GM12878 (cell line): ENCODE measurements at regions of chr5 and their contacts with region 1.

Region 1: DNA sequence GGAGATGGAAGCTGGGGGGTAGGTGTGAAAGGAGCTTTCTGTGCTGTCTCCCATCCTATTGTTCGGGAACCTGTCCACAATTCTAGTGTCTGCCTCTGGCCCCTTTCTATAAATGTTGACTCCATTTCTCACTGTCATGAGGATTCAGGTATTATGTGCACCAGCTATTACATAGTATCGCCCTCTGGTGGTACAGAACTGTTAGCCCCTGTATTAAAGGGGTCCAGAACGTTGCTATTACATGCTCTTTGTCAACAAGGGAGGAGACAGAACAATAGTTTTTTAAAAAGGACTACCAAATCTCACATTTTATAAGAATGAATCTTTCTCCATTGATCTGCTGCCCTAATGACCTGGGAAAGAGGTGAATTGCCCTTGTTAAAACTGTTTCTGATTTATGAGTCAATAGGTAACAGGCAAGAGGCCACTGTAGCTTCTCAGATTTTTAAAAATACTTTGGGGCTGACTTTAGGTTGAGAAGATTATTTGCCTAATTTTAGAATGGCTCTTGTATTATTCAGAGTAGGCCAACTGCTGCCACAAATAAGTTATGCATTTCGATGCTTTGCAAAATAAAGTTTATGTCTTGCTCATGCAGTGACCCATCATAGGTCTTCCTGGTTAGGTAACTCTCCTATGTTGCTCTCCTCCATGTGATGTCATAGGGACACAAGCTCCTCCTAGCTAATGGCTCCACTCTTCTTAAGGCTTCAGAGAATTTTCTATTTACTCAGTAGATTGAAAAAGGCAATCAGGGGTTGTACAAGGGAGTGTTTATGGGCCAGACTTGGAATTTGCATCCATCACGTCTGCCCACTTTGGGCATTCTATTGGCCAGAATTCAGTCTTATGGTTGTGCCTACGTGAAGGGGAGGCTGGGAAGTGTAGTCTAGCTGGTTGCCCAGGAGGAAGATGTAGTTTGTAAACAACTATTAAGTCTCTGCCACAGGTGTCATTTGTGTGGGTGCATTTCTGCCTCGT is 20.8 kb downstream of the DCANP1 start:
- DNase-seq: peak; percentile 12
- ATAC-seq: peak; percentile 98
- H3K4me3 ChIP-seq: no peak overlapping the region
- H3K27ac ChIP-seq: no peak overlapping the region
- H3K4me1 ChIP-seq: no peaks in the 10 kb centered on the region
- H3K27me3 ChIP-seq: peaks cover 0 to 3% of the 10 kb centered on the region in 2 experiments; a peak in 1 of 4 replicates
- CTCF ChIP-seq: peak; percentile 70 to 77 (median 71)
- EP300 ChIP-seq: no peak
- POLR2A ChIP-seq: no peak
- RAD21 ChIP-seq: peak; percentile 75

Region 2: GRCh38 chr5:135393691-135394090 is 32.7 kb before region 1 on chr5:
- CTCF ChIA-PET with region 1: interaction called, 11 read pairs
- POLR2A ChIA-PET with region 1: no interaction called
- RAD21 ChIA-PET with region 1: no interaction called
- SMC1A ChIA-PET with region 1: interaction called, 6 read pairs
- in situ Hi-C with region 1: no loop called
- intact Hi-C with region 1: no loop called
- DNase-seq: no peak
- ATAC-seq: no peak
- H3K4me3 ChIP-seq: no peak overlapping the region
- H3K27ac ChIP-seq: no peak overlapping the region; the same call in 1 of the 2 replicates
- H3K4me1 ChIP-seq: peaks cover 23% of the 10 kb centered on the region
- H3K27me3 ChIP-seq: no peaks in the 10 kb centered on the region
- CTCF ChIP-seq: no peak
- EP300 ChIP-seq: no peak
- POLR2A ChIP-seq: no peak
- RAD21 ChIP-seq: no peak

Region 3: GRCh38 chr5:135405082-135405481 is 21.3 kb before region 1 on chr5:
- CTCF ChIA-PET with region 1: interaction called, 10 read pairs
- POLR2A ChIA-PET with region 1: no interaction called
- RAD21 ChIA-PET with region 1: interaction called, 6 read pairs
- SMC1A ChIA-PET with region 1: interaction called, 5 read pairs
- in situ Hi-C with region 1: no loop called
- intact Hi-C with region 1: no loop called
- DNase-seq: no peak
- ATAC-seq: no peak
- H3K4me3 ChIP-seq: no peak overlapping the region
- H3K27ac ChIP-seq: no peak overlapping the region
- H3K4me1 ChIP-seq: peaks cover 1% of the 10 kb centered on the region
- H3K27me3 ChIP-seq: no peaks in the 10 kb centered on the region
- CTCF ChIP-seq: no peak
- EP300 ChIP-seq: no peak
- POLR2A ChIP-seq: no peak
- RAD21 ChIP-seq: no peak

Region 4: DNA sequence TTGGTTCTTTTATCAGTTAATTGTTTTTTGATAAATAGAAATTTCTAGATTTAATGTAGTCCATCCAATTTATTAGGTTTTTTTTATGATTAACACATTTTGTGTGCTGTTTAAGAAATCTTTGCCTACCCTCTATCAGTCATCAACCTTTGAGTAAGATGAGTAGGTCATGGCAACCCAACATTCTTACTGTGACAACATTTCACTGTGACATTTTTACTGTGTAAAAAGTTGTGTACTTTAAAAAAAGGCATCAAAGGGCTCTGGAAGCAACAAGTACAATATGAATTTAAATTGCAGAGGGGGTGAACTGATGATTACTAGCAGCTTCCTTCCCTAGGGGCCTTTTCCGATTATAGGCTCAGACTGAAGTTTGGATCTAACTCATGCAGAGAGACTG is 16.0 kb before region 1 on chr5:
- CTCF ChIA-PET with region 1: interaction called, 10 read pairs
- POLR2A ChIA-PET with region 1: no interaction called
- RAD21 ChIA-PET with region 1: no interaction called
- SMC1A ChIA-PET with region 1: interaction called, 3 read pairs
- in situ Hi-C with region 1: no loop called
- intact Hi-C with region 1: no loop called
- DNase-seq: no peak
- ATAC-seq: no peak
- H3K4me3 ChIP-seq: no peak overlapping the region
- H3K27ac ChIP-seq: no peak overlapping the region
- H3K4me1 ChIP-seq: no peaks in the 10 kb centered on the region
- H3K27me3 ChIP-seq: no peaks in the 10 kb centered on the region
- CTCF ChIP-seq: no peak
- EP300 ChIP-seq: no peak
- POLR2A ChIP-seq: no peak
- RAD21 ChIP-seq: no peak

Region 5: GRCh38 chr5:135437796-135438560 is 11.6 kb after region 1 on chr5:
- CTCF ChIA-PET with region 1: interaction called, 19 read pairs
- POLR2A ChIA-PET with region 1: no interaction called
- RAD21 ChIA-PET with region 1: interaction called, 4 read pairs
- SMC1A ChIA-PET with region 1: interaction called, 14 read pairs
- in situ Hi-C with region 1: no loop called
- intact Hi-C with region 1: no loop called
- DNase-seq: no peak
- ATAC-seq: no peak
- H3K4me3 ChIP-seq: no peak overlapping the region
- H3K27ac ChIP-seq: no peak overlapping the region; the same call in 1 of the 2 replicates
- H3K4me1 ChIP-seq: peaks cover 19% of the 10 kb centered on the region
- H3K27me3 ChIP-seq: no peaks in the 10 kb centered on the region
- CTCF ChIP-seq: no peak
- EP300 ChIP-seq: no peak
- POLR2A ChIP-seq: no peak
- RAD21 ChIP-seq: no peak

Region 6: GRCh38 chr5:135443161-135443960 is 17.0 kb after region 1 on chr5:
- CTCF ChIA-PET with region 1: interaction called, 19 read pairs
- POLR2A ChIA-PET with region 1: no interaction called
- RAD21 ChIA-PET with region 1: no interaction called
- SMC1A ChIA-PET with region 1: interaction called, 14 read pairs
- in situ Hi-C with region 1: no loop called
- intact Hi-C with region 1: no loop called
- DNase-seq: no peak
- ATAC-seq: no peak
- H3K4me3 ChIP-seq: no peak overlapping the region
- H3K27ac ChIP-seq: no peak overlapping the region
- H3K4me1 ChIP-seq: peaks cover 17% of the 10 kb centered on the region
- H3K27me3 ChIP-seq: 0 out of 4 replicates have a peak, but pooled peaks cover 0 to 1% of the 10 kb centered on the region in 2 experiments
- CTCF ChIP-seq: no peak
- EP300 ChIP-seq: no peak
- POLR2A ChIP-seq: no peak
- RAD21 ChIP-seq: no peak

Region 7: DNA sequence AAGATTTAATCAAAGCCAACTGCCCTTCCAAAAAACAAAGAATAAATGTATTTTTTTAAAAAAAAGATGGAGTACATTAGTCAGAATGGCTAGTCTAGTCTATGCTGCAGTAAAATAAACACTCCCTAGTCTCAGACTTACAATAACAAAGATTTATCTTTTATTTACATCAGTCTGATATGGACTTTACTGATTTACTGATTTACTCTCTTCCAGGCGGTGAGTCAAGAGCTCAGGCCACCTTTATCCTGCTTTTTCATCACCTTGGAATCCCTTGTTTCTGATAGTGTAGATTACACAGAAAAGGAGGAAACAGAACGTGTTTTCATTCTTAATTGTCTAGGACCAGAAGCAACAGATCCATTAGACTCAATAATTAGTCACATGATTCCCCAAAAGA is 1229.0 kb after region 1 on chr5:
- CTCF ChIA-PET with region 1: no interaction called
- POLR2A ChIA-PET with region 1: no interaction called
- RAD21 ChIA-PET with region 1: no interaction called
- SMC1A ChIA-PET with region 1: no interaction called
- in situ Hi-C with region 1: no loop called
- intact Hi-C with region 1: no loop called
- DNase-seq: no peak
- ATAC-seq: no peak
- H3K4me3 ChIP-seq: no peak overlapping the region
- H3K27ac ChIP-seq: no peak overlapping the region
- H3K4me1 ChIP-seq: no peaks in the 10 kb centered on the region
- H3K27me3 ChIP-seq: no peaks in the 10 kb centered on the region
- CTCF ChIP-seq: no peak
- EP300 ChIP-seq: no peak
- POLR2A ChIP-seq: no peak
- RAD21 ChIP-seq: no peak